Dendritic cell treated with granulocyte-macrophage colony-stimulating factor and Interleukin-4, amounts not matched to agents 40 ng/mL and 50 ng/mL, for 4 days (primary cell): ENCODE measurements at regions of chr12 and their contacts with region 1.

Region 1: DNA sequence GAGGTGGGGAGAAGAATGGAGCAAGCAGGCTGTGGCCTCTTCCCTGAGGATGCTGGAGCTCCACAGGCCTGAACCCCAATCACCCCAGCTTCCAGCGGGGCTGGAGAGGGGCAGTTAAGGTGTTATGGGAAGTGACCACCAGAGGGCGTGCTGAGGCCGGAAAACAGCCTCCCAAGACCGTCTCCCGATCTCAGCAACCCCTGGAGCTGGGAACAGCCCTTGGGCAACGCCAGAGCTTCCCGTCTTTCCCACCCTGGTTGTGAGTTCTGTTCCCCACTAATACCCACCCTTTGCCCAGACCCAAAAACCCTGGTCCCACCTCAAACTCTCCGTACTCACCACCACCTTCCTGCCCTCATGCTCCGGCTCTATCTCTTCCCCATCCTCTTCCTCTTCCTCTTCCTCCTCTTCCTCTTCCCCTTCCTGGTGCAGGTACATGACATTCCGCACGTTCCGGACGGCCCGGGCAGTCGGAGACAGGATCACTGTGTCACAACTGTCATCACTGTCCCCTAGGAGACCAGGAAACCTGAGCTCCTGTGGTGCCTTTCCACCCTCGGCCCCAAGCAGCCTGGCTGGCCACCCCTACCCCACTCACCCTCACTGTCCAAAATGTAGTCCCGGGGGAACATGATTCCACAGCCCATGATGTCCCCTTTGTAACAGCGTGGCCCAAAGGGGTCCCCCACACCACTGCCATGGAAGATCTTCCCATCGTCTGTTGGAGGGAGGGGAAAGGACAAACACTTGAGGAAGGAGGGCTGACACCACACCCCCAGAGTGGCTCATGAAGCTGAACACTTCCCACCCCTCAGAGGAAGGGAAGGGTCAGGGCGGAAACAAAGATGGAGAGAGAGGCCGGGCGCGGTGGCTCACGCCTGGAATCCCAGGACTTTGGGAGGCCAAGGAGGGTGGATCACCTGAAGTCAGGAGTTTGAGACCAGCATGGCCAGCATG is 12.9 kb downstream of the SPRYD3 start:
- H3K4me3 Mint-ChIP-seq: no peak overlapping the region
- H3K27ac Mint-ChIP-seq: no peak overlapping the region
- H3K4me1 Mint-ChIP-seq: peaks cover 31% of the 10 kb centered on the region
- H3K27me3 Mint-ChIP-seq: peaks cover 10% of the 10 kb centered on the region

Region 2: DNA sequence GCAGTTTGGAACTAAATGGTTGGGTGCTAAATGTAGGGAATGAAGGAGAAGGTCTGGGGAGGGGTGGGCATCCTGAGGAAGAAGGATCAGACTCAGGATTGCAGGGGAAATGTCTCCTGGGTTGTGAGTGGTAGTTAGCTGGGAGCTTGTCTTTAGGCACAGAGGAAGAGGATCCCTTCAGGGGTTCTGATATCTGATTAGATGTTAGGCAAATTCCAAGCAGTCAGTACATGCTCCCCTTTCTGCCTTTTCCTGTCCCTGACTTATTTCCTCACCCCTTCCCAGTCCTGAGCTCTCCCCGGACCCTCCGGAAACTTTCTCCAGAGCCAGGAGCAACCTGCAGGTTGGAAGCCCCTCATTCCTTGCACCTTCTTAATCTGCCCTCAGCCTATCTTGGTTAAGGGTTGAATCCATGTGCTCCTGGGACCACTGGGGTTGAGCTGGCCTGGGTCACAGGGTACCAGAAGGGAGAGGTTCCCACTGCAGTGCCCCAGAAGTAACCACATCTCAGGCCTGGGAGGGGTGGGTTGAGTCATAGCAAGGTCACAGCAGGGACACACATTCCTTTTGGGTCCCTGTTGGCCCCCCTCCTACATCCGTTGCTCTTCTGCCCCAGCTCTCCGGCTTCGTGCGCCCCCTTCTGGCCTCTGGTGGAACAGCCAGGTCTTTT is 32.9 kb after region 1 on chr12:
- intact Hi-C with region 1: loop called (anchors 1 kb)
- H3K4me3 Mint-ChIP-seq: no peak overlapping the region
- H3K27ac Mint-ChIP-seq: peak overlapping the region; percentile 29
- H3K4me1 Mint-ChIP-seq: peaks cover 71% of the 10 kb centered on the region
- H3K27me3 Mint-ChIP-seq: peaks cover 28% of the 10 kb centered on the region

Region 3: DNA sequence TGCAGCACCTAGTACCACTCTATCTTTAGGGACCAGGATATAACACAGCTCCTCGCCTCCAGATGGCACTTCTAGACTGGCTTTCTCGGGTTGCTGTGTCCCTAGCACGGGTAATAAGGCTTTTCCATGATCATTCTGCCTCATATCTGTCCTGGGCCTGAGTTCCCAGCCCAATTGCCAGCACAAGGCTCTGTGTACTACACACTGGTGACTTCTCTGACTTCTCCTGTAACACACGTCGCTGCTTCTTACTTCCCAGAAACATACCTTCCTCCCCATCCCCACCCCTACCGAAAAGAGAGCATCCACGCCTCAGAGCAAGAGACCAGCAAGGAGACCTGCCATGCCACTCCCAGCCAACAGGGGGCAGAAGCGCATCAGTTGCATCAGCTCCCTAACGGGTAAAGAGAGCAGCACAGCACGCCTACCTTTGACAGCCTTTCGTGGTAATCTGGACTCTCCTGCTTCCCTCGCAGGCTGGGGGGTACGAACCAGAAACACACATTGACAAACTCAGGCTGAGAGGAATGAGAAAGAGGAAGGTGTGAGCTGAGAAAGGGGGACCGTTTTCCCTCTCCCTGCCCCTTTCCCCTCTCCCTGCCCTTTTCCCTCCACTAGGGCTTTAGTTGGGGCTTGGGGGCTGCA is 93.1 kb after region 1 on chr12:
- intact Hi-C with region 1: no loop called
- H3K4me3 Mint-ChIP-seq: no peak overlapping the region
- H3K27ac Mint-ChIP-seq: no peak overlapping the region
- H3K4me1 Mint-ChIP-seq: peaks cover 9% of the 10 kb centered on the region
- H3K27me3 Mint-ChIP-seq: peaks cover 1% of the 10 kb centered on the region